ENCODE measurements at regions of chr1 and their contacts with region 1.

Region 1: GRCh38 chr1:101136739-101137138 is 100.1 kb upstream of the S1PR1 start:
- DNase-seq: peak in 1 of 2 donors; percentile 74
- ATAC-seq: peak; percentile 63 to 70 (median 66)
- H3K4me3 ChIP-seq: no peak overlapping the region
- H3K4me3 Mint-ChIP-seq: peak overlapping the region; percentile 80
- H3K27ac ChIP-seq: peak overlapping the region; percentile 69
- H3K27ac Mint-ChIP-seq: peak overlapping the region; percentile 88 to 93
- H3K4me1 ChIP-seq: peaks cover 6% of the 10 kb centered on the region
- H3K4me1 Mint-ChIP-seq: peaks cover 38 to 50% of the 10 kb centered on the region in 2 donors
- H3K27me3 ChIP-seq: no peaks in the 10 kb centered on the region
- H3K27me3 Mint-ChIP-seq: no peaks in the 10 kb centered on the region
- CTCF ChIP-seq: no peak

Region 2: GRCh38 chr1:101257500-101258325 is 121.0 kb after region 1 on chr1:
- intact Hi-C with region 1: no loop called
- DNase-seq: peak in 1 of 2 donors; percentile 73
- ATAC-seq: peak; percentile 57 to 90 (median 74)
- H3K4me3 ChIP-seq: no peak overlapping the region
- H3K4me3 Mint-ChIP-seq: peak overlapping the region; percentile 71
- H3K27ac ChIP-seq: peak overlapping the region; percentile 60
- H3K27ac Mint-ChIP-seq: peak overlapping the region; percentile 80 to 88
- H3K4me1 ChIP-seq: peaks cover 28% of the 10 kb centered on the region
- H3K4me1 Mint-ChIP-seq: peaks cover 47 to 62% of the 10 kb centered on the region in 2 donors
- H3K27me3 ChIP-seq: no peaks in the 10 kb centered on the region
- H3K27me3 Mint-ChIP-seq: no peaks in the 10 kb centered on the region
- CTCF ChIP-seq: no peak

Region 3: DNA sequence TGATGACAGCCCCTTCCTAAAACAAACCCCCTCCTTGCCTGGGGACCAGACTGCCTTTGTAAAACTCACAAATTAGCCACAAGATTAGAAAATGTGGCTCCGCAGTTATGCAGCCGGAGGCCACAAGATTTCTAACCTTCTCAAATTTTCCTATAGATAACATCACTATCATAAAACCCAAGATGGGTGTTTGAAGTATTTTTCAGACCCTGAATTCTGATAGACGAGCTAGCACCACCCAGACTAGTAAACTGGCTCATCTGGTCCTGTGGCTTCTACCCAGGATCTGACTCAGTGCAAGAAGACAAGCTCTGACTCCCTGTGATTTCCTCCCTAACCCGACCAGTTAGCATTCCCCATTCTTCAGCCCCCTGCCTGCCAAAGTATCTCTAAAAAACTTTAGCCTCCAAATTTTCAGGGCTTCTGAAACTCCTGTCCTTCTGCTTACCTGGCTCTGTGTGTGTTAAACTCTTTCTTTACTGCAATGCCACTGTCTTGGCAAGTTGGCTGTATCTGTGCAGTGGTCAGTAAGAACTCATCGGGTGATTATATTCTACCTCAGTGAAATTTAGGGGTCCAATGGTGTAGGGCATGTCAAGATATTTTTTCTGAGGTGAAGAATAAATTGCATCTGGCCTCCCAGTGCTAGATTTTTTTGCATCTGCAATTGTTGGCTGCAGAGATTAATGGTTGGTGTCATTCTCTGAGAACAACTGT is 202.1 kb after region 1 on chr1:
- intact Hi-C with region 1: loop called (anchors 10 kb)
- DNase-seq: peak; percentile 33 to 49
- ATAC-seq: peak; percentile 72 to 85 (median 84)
- H3K4me3 ChIP-seq: no peak overlapping the region
- H3K4me3 Mint-ChIP-seq: peak overlapping the region; percentile 78
- H3K27ac ChIP-seq: peak overlapping the region; percentile 47
- H3K27ac Mint-ChIP-seq: peak overlapping the region; percentile 91 to 92
- H3K4me1 ChIP-seq: peaks cover 20% of the 10 kb centered on the region
- H3K4me1 Mint-ChIP-seq: peaks cover 77 to 86% of the 10 kb centered on the region in 2 donors
- H3K27me3 ChIP-seq: no peaks in the 10 kb centered on the region
- H3K27me3 Mint-ChIP-seq: no peaks in the 10 kb centered on the region
- CTCF ChIP-seq: no peak

Measured in natural killer cell (primary cell).